ENCODE measurements at regions of chr17 and their contacts with region 1.

Region 1: GRCh38 chr17:43377056-43377810 is 21.6 kb upstream of the ARL4D start:
- DNase-seq: no peak
- H3K4me3 ChIP-seq: no peak overlapping the region
- H3K27ac ChIP-seq: no peak overlapping the region
- H3K4me1 ChIP-seq: no peaks in the 10 kb centered on the region
- H3K27me3 ChIP-seq: no peaks in the 10 kb centered on the region
- CTCF ChIP-seq: no peak

Region 2: GRCh38 chr17:43330876-43331639 is 46.2 kb before region 1 on chr17:
- CTCF ChIA-PET with region 1: no interaction called
- dilution Hi-C with region 1: loop called (anchors 5 kb)
- in situ Hi-C with region 1: no loop called
- intact Hi-C with region 1: no loop called
- DNase-seq: no peak
- H3K4me3 ChIP-seq: no peak overlapping the region
- H3K27ac ChIP-seq: no peak overlapping the region
- H3K4me1 ChIP-seq: no peaks in the 10 kb centered on the region
- H3K27me3 ChIP-seq: no peaks in the 10 kb centered on the region
- CTCF ChIP-seq: no peak

Region 3: DNA sequence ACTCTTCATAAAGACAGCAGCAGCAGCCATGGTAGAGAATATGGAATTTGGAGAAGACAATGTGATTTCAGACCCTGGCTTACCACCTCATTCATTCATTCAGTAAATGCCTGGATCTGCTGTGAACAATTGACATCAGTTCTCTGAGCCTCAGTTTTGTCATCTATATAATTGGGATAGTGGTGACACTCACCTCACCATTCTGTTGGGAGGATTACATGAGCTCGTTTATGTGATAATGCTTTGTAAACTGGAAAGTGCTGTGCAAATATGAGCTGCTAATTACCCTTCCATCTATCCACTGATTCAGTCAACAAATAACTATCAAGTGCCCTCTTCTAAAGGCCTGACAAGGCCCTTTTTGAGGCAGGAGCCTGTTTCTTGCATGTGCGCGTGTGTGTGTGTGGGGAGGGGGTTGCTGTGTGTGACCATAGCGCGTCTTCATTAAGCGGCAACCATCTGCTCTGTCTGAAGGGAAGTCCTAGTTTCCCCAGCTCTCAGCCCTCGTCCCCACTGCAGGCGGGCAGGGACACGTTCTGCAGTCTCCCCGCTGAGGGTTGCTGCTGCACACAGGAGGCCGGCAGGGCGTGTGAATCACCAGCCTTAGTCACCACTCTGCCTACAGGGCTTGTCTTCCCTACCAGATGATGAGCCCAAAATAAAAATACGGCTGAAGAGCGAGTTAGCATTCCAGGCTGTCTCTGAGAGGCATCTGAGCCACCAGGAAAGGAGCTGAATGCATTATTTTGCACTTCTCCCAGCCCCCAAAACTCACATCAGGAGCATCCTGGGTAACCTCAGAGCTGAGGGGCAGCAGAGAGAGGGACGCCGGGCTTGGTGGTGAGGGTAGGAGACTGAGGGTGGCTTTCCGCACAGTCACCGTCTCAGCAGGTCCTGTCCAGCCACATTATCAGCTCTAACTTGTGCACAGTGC is 41.5 kb after region 1 on chr17:
- CTCF ChIA-PET with region 1: no interaction called
- dilution Hi-C with region 1: no loop called
- in situ Hi-C with region 1: no loop called
- intact Hi-C with region 1: no loop called
- DNase-seq: peak; percentile 95
- H3K4me3 ChIP-seq: peak overlapping the region; percentile 16 to 41 (median 37)
- H3K27ac ChIP-seq: peak overlapping the region; percentile 73
- H3K4me1 ChIP-seq: peaks cover 39% of the 10 kb centered on the region
- H3K27me3 ChIP-seq: no peaks in the 10 kb centered on the region
- CTCF ChIP-seq: peak in 1 of 2 donors; percentile 25

Region 4: DNA sequence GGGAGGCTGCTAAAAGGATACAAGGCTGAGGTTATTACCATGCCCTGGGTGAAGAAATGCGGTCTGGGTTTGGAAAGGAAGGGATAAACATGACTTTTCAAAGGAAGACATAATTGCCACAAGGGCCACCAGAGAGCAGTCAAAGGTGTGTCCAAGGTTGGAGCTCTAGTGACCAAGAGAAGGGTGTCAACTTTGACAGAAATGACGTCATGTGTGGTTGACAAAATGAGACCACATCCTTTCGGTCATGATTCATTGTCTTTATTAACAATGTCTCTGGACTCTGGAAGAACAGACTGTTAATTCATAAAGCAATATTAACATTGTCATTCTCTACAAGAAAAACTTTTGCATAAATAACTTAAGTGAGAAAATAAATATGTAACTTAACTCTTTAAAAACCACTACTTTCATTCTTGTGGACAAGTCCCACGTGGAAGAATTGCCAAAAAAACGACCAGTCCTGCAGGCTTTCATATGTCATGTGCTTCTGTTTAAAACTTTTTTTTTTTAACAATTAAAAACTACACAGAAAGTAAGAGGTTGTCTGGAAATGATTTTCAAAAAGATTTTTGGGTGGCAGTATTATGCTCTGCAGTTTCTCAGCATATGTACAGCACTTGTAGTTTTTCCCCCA is 376.4 kb after region 1 on chr17:
- CTCF ChIA-PET with region 1: no interaction called
- dilution Hi-C with region 1: loop called (anchors 5 kb)
- in situ Hi-C with region 1: no loop called
- intact Hi-C with region 1: no loop called
- DNase-seq: peak; percentile 82
- H3K4me3 ChIP-seq: no peak overlapping the region
- H3K27ac ChIP-seq: no peak overlapping the region
- H3K4me1 ChIP-seq: peaks cover 32% of the 10 kb centered on the region
- H3K27me3 ChIP-seq: no peaks in the 10 kb centered on the region
- CTCF ChIP-seq: no peak

Measured in mammary epithelial cell (primary cell).